Activated T-helper 2 cell treated with anti-CD3 and anti-CD28 coated beads, Interferon-gamma antibody, Interleukin-2, Interleukin-4, amounts not matched to agents 10 μg/mL and 5 μg/mL and 100 μg/mL, durations not matched to agents 14 hours and 24 hours and 36 hours (primary cell): ENCODE measurements at regions of chr14 and their contacts with region 1.

Region 1: DNA sequence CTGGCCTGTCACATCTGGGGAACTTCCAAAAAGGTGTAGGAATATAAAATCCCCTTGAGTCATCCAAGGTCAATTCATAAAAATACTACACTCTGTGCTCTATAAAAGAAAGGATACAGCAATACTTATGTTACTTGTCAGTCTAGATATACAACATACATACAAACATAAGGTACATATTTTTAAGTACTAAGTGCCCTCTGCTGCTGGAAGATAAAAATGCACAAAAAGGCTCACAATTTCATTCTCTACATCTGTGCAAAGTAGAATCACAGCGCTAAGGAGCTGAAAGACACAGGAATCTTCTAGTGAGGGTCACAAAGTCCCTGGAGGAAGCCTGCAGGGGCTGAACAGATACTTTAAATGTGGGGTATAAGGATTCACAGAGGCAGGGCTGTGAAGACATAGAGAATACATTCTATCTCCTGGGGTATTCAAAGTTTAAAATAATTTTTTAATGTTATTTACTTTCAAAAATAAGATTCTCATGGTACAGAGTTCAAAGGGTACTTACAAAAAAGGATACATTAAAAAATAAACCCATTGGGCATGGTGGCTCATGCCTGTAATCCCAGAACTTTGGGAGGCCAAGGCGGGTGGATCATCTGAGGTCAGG is 10.2 kb upstream of the GOLGA5 start:
- DNase-seq: no peak
- H3K4me3 Mint-ChIP-seq: no peak overlapping the region
- H3K27ac Mint-ChIP-seq: no peak overlapping the region
- H3K4me1 Mint-ChIP-seq: peaks cover 16% of the 10 kb centered on the region
- H3K27me3 Mint-ChIP-seq: peaks cover 17% of the 10 kb centered on the region

Region 2: DNA sequence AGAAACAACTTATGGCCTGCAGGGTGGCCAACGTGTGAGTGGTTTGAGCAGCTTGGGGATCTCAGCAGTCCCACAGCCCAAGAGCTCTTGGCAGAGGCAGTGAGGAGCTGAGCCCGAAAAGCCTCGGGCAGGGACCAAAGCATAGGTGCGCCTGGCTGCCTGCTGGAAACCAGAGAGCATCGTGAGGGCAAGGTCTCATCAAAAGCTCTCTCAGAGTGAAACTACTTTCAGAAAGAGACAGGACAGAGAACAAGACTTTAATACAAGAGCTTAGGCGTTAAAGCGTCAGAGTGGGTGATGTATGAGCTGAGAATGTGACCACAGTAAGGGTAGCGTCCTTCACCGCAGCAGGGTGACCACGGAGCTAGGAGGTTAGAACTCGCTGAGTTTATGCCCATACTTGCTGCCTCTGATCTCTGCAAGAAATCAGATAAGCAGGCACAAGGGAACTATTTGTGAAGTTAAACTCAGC is 66.3 kb before region 1 on chr14:
- intact Hi-C with region 1: loop called (anchors 1 kb)
- DNase-seq: no peak
- H3K4me3 Mint-ChIP-seq: no peak overlapping the region
- H3K27ac Mint-ChIP-seq: no peak overlapping the region
- H3K4me1 Mint-ChIP-seq: peaks cover 5% of the 10 kb centered on the region
- H3K27me3 Mint-ChIP-seq: peaks cover 27% of the 10 kb centered on the region

Region 3: DNA sequence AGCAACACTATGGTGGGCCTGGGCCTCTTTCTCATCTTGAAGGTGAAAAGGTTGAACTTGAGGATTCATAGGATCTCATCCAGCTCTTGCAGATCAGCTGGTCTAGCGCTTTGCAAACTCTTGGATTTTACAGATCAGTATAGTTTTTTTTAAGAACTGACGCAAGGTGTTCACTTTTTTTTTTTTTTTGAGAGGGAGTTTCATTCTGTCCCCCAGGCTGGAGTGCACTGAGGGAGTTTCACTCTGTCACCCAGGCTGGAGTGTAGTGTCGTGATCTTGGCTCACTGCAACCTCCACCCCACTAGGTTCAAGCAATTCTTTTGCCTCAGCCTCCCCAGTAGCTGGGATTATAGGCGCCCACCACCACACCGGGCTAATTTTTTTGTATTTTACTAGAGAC is 15.1 kb before region 1 on chr14:
- intact Hi-C with region 1: no loop called
- DNase-seq: no peak
- H3K4me3 Mint-ChIP-seq: no peak overlapping the region
- H3K27ac Mint-ChIP-seq: no peak overlapping the region
- H3K4me1 Mint-ChIP-seq: peaks cover 21% of the 10 kb centered on the region
- H3K27me3 Mint-ChIP-seq: peaks cover 52% of the 10 kb centered on the region

Region 4: DNA sequence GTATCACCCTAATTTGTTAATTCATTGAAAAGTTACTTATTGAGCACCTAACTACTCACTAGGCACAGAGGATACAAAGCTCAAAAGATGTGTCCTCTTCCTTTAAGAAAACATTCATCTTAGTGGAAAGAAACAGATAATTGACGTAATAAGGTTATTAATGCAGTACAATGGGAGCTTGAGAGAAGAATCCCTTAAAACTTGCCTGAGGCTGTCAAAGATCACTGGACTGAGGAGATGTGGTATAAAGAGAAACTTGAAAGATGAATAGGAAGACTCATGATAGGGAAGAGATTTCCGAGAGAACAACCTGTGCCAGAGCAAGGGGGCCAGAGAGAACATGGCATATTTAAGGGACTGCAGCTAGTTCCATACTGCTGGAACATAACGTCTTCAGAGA is 29.3 kb after region 1 on chr14:
- intact Hi-C with region 1: no loop called
- DNase-seq: no peak
- H3K4me3 Mint-ChIP-seq: no peak overlapping the region
- H3K27ac Mint-ChIP-seq: no peak overlapping the region
- H3K4me1 Mint-ChIP-seq: no peaks in the 10 kb centered on the region
- H3K27me3 Mint-ChIP-seq: no peaks in the 10 kb centered on the region